HepG2 (cell line): ENCODE measurements at regions of chr14 and their contacts with region 1.

Region 1: GRCh38 chr14:23555882-23556699 is at the start of gene THTPA:
- DNase-seq: peak; percentile 96
- ATAC-seq: peak; percentile 87
- H3K4me3 ChIP-seq: peak within 1 kb of the TSS; percentile 83 to 97 (median 84)
- H3K27ac ChIP-seq: peak within 1 kb of the TSS; percentile 89
- H3K4me1 ChIP-seq: peaks cover 60% of the 10 kb centered on the region
- H3K27me3 ChIP-seq: no peaks in the 10 kb centered on the region; a peak in 1 of 5 replicates
- CTCF ChIP-seq: peak; percentile 41
- EP300 ChIP-seq: peak in 1 of 2 experiments; percentile 54; a peak in 1 of 4 replicates
- POLR2A ChIP-seq: peak in 1 of 2 experiments; percentile 93; a peak in 2 of 4 replicates
- RAD21 ChIP-seq: peak; percentile 71
- total RNA-seq, gene THTPA: 7.1 and 7.4 TPM in 2 replicates

Region 2: GRCh38 chr14:23130871-23131270 is 425.2 kb before region 1 on chr14:
- CTCF ChIA-PET with region 1: no interaction called
- POLR2A ChIA-PET with region 1: no interaction called
- in situ Hi-C with region 1: no loop called
- intact Hi-C with region 1: no loop called
- DNase-seq: no peak
- ATAC-seq: no peak
- H3K4me3 ChIP-seq: no peak overlapping the region
- H3K27ac ChIP-seq: no peak overlapping the region
- H3K4me1 ChIP-seq: no peaks in the 10 kb centered on the region
- H3K27me3 ChIP-seq: peaks cover 22 to 60% of the 10 kb centered on the region in 2 experiments
- CTCF ChIP-seq: no peak
- EP300 ChIP-seq: no peak
- POLR2A ChIP-seq: no peak
- RAD21 ChIP-seq: no peak

Region 3: DNA sequence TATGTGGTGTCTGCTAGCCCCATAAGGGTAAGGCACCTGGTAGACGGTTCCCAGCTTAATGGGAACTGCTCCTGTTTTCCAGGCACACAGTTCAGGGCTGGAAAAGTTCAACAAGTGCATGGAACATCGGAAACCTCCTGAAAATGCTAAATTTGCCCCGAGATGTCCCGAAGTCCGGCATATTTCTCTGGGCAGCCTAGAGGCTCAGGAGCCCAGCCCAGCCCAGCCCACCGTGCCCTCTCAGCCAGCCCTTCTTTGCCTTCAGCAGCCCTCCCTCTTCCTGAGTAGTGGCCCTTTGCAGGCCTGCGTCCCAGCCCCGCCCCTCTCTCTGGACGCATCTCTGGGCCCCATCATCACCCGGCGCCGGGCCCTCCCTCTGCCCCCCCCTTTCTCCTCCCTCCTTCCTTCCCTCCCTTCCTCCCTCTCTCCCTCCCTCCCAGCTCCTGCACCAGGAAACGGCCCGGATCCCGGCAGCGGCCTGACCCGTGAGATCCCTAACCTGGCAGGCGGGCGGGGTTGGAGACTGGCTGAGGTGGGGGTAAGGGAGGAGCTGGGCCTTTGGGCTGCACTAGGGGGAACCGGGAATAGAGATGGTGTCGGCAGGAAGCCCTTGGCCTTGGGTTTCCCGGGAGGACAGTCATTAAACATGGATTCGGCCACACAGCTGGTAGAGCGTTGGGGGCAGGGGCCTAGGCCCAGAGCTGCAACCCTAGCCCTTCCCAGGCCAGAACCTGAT is 249.5 kb before region 1 on chr14 and contains the start of gene BCL2L2:
- CTCF ChIA-PET with region 1: no interaction called
- POLR2A ChIA-PET with region 1: interaction called, 11 read pairs
- in situ Hi-C with region 1: no loop called
- intact Hi-C with region 1: no loop called
- DNase-seq: peak; percentile 98
- ATAC-seq: peak; percentile 76
- H3K4me3 ChIP-seq: peak within 1 kb of the TSS; percentile 95 to 99 (median 96)
- H3K27ac ChIP-seq: peak within 1 kb of the TSS; percentile 87
- H3K4me1 ChIP-seq: peaks cover 60% of the 10 kb centered on the region
- H3K27me3 ChIP-seq: no peaks in the 10 kb centered on the region; a peak in 1 of 5 replicates
- CTCF ChIP-seq: peak; percentile 54
- EP300 ChIP-seq: peak; percentile 69 to 85
- POLR2A ChIP-seq: peak in 1 of 2 experiments; percentile 90; a peak in 2 of 4 replicates
- RAD21 ChIP-seq: no peak
- total RNA-seq, gene BCL2L2: 26.6 and 28.1 TPM in 2 replicates

Region 4: DNA sequence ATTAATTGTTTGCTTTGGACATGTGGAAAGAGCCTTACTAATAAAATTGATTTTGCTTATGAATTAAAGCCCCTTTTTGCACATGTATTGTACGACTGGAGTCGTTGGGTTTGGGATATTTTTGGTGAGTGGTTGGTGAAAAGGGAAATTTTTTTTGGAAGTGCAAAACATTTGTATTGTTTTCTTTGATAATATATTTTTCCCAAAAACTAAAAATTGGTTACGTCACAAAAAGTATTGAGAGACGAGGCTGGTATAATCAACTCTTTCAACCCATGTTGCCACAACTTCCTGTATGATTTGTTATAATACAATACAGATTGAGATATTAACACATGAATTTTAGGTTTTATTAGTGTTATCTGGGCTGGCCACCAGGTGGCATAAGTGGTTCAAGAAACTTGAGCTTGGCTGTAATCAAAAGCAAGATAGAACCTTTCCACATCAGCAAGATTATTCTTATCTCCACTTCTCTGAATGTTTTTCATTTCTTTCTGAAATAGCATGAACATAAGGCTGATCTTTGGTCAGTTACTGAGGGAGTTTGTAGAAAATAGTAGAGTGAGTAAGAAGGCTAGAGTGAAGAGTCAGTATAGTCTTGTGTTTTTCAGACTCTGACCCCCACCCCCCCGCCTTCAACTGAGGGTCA is 77.9 kb before region 1 on chr14:
- CTCF ChIA-PET with region 1: interaction called, 275 read pairs
- POLR2A ChIA-PET with region 1: interaction called, 57 read pairs
- in situ Hi-C with region 1: loop called (anchors 5 kb)
- intact Hi-C with region 1: no loop called
- DNase-seq: peak; percentile 77
- ATAC-seq: peak; percentile 33
- H3K4me3 ChIP-seq: no peak overlapping the region
- H3K27ac ChIP-seq: no peak overlapping the region
- H3K4me1 ChIP-seq: peaks cover 8% of the 10 kb centered on the region
- H3K27me3 ChIP-seq: no peaks in the 10 kb centered on the region
- CTCF ChIP-seq: peak; percentile 91
- EP300 ChIP-seq: no peak
- POLR2A ChIP-seq: no peak
- RAD21 ChIP-seq: peak; percentile 84

Region 5: GRCh38 chr14:23539248-23540140 is 16.6 kb before region 1 on chr14:
- CTCF ChIA-PET with region 1: interaction called, 4 read pairs
- POLR2A ChIA-PET with region 1: interaction called, 17 read pairs
- in situ Hi-C with region 1: no loop called
- intact Hi-C with region 1: no loop called
- DNase-seq: peak; percentile 86
- ATAC-seq: peak; percentile 85
- H3K4me3 ChIP-seq: no peak overlapping the region
- H3K27ac ChIP-seq: no peak overlapping the region
- H3K4me1 ChIP-seq: peaks cover 7% of the 10 kb centered on the region
- H3K27me3 ChIP-seq: no peaks in the 10 kb centered on the region
- CTCF ChIP-seq: peak; percentile 96
- EP300 ChIP-seq: no peak
- POLR2A ChIP-seq: no peak
- RAD21 ChIP-seq: peak; percentile 81

Region 6: DNA sequence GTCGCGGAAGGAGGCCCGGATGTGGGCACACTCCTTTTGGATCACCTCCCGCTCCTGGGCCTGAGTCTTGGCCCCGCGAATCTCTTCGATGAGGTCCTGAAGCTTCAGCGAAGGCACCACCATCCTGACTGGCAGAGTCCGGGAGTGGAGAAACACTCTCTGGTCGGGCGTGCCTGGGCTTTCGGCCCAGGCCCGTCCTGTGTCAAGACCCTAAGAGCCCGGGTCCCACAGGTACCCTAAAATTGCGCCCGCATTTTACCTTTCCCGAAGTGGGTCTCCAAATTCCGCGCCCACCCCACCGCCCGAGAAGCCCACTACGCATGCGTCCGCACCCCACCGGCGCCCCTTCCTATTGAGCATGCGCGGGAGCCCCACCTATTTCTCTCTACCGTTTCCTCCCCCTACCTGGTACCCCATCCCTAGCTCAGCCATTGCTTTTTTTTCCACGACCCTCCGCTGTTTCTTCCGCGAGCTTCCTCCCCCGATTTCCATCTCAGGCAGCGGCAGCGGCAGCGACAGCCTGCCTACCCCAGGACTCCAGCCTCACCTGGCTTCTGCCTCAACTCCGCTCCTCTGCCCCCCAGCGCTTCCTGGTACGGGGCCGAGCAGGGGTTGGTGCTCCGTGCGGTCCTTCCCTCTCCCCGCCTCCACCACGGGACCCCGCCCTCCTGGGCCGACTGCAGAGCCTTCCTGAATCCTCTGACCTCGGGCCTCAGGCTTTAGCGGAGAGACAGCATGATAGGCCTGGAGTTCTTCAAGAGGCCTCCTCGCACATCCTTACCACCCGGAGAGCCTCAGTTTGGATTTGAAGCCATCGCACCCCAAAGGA is 11.3 kb after region 1 on chr14 and contains the start of gene AP1G2:
- CTCF ChIA-PET with region 1: interaction called, 3 read pairs
- POLR2A ChIA-PET with region 1: interaction called, 113 read pairs
- in situ Hi-C with region 1: no loop called
- intact Hi-C with region 1: loop called (anchors 1 kb)
- DNase-seq: peak; percentile 97
- ATAC-seq: peak; percentile 86
- H3K4me3 ChIP-seq: peak within 1 kb of the TSS; percentile 68 to 88 (median 70)
- H3K27ac ChIP-seq: peak within 1 kb of the TSS; percentile 41
- H3K4me1 ChIP-seq: peaks cover 49% of the 10 kb centered on the region
- H3K27me3 ChIP-seq: peaks cover 0 to 8% of the 10 kb centered on the region in 2 experiments; a peak in 1 of 5 replicates
- CTCF ChIP-seq: peak; percentile 50
- EP300 ChIP-seq: peak in 1 of 2 experiments; percentile 54; a peak in 1 of 4 replicates
- POLR2A ChIP-seq: peak in 1 of 2 experiments; percentile 83; a peak in 2 of 4 replicates
- RAD21 ChIP-seq: no peak; the same call in 1 of the 2 replicates
- total RNA-seq, gene AP1G2: 39.4 and 96.9 TPM in 2 replicates